Ovary (tissue), 10 donors: ENCODE measurements at regions of chr9 and their contacts with region 1.

Region 1: GRCh38 chr9:16726718-16727451 is 143.6 kb downstream of the BNC2 start:
- DNase-seq: peak; percentile 83 to 91 (median 89)
- H3K4me3 ChIP-seq: peak overlapping the region; percentile 53
- H3K27ac ChIP-seq: peak overlapping the region; percentile 83 to 94
- H3K4me1 ChIP-seq: no peaks in the 10 kb centered on the region
- H3K27me3 ChIP-seq: no peaks in the 10 kb centered on the region
- CTCF ChIP-seq: no peak
- EP300 ChIP-seq: peak; percentile 17
- POLR2A ChIP-seq: peak; percentile 70

Region 2: GRCh38 chr9:16191691-16192402 is 535.0 kb before region 1 on chr9:
- intact Hi-C with region 1: loop called in 1 of 4 experiments (anchors 10 kb)
- DNase-seq: peak; percentile 87 to 95 (median 91)
- H3K4me3 ChIP-seq: no peak overlapping the region
- H3K27ac ChIP-seq: peak overlapping the region in 1 of 2 donors; percentile 43
- H3K4me1 ChIP-seq: peaks cover 11% of the 10 kb centered on the region
- H3K27me3 ChIP-seq: no peaks in the 10 kb centered on the region
- CTCF ChIP-seq: peak; percentile 61 to 83 (median 81)
- EP300 ChIP-seq: no peak
- POLR2A ChIP-seq: no peak

Region 3: DNA sequence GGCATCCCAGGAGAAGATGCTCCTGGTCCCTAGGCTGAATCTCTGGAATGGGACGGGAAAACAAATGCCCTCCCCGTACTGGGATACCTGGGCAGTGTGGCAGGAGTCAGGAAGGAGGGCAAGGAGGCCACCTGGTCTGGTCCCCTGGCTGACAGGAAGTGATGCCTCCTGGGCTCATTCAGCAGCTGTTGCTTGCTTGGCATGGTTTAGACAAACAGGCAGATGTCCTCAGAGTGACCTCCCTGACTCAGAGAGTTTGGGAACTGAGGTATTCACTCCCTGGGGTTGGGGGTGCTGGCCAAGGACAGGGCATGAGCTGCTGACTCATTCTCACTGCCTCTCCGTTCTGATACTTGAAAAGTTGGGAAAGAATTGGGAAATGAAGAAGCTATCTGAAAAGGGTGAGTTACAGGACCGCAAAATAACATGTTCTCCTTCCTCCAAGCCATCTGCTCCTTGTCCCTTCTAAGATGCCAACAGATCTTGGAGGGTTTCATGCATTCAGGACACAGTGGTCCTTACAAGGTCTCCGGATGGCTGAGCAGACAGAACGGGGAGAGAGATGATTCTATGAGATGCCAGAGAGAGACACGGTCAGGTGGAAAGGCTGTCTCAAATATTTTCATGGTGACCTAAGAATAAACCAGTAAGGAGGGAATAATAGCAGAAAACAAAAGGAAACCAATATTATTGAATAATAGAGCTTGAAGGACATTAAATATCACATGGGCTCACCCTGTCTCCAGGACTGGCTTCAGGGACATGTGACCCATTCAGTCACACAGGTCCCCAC is 390.9 kb before region 1 on chr9:
- intact Hi-C with region 1: loop called in 1 of 4 experiments (anchors 10 kb)
- DNase-seq: peak; percentile 82 to 95 (median 87)
- H3K4me3 ChIP-seq: no peak overlapping the region
- H3K27ac ChIP-seq: peak overlapping the region; percentile 17 to 81
- H3K4me1 ChIP-seq: peaks cover 17% of the 10 kb centered on the region
- H3K27me3 ChIP-seq: no peaks in the 10 kb centered on the region
- CTCF ChIP-seq: peak in 1 of 3 donors; percentile 10
- EP300 ChIP-seq: peak; percentile 97
- POLR2A ChIP-seq: no peak

Region 4: DNA sequence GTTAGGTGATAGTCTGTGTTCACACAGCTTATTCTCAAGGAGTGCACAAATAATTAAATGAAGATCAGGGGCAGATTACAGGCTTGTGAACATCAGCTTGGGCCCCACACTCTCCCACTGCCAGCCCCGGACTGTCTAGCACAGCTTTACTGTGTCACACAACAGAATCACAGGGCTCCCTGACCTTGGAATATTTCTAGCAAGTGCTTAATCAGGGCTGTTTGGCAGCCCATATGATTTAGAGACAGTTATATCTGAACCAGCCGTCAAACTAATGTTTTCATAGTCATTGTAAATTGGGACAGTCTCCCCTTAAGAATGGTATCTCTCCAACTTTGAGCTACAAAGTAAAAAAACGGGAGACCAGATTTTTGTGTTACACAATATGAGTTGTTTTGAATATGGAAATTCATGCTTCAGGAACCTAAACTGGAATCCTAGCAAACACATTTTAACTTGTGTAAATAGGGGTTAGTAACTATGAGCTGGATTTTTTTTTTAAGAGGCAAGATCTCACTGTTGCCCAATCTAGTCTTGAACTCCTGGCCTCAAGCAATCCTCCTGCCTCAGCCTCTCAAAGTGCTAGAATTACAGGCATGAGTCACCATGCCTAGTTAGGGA is 374.0 kb before region 1 on chr9:
- intact Hi-C with region 1: loop called in 1 of 4 experiments (anchors 10 kb)
- DNase-seq: peak in 4 of 5 donors; percentile 49 to 68 (median 65)
- H3K4me3 ChIP-seq: no peak overlapping the region
- H3K27ac ChIP-seq: peak overlapping the region in 1 of 2 donors; percentile 77
- H3K4me1 ChIP-seq: peaks cover 14% of the 10 kb centered on the region
- H3K27me3 ChIP-seq: no peaks in the 10 kb centered on the region
- CTCF ChIP-seq: no peak
- EP300 ChIP-seq: no peak
- POLR2A ChIP-seq: no peak

Region 5: GRCh38 chr9:16417161-16417560 is 309.7 kb before region 1 on chr9:
- intact Hi-C with region 1: loop called in 1 of 4 experiments (anchors 10 kb)
- DNase-seq: no peak
- H3K4me3 ChIP-seq: peak overlapping the region; percentile 1
- H3K27ac ChIP-seq: peak overlapping the region in 1 of 2 donors; percentile 65
- H3K4me1 ChIP-seq: peaks cover 21% of the 10 kb centered on the region
- H3K27me3 ChIP-seq: no peaks in the 10 kb centered on the region
- CTCF ChIP-seq: no peak
- EP300 ChIP-seq: no peak
- POLR2A ChIP-seq: no peak

Region 6: GRCh38 chr9:16871356-16872151 is 144.7 kb after region 1 on chr9:
- intact Hi-C with region 1: loop called in 3 of 4 experiments (anchors 2 to 5 kb)
- DNase-seq: peak; percentile 55 to 78 (median 69)
- H3K4me3 ChIP-seq: peak overlapping the region; percentile 88
- H3K27ac ChIP-seq: peak overlapping the region; percentile 93
- H3K4me1 ChIP-seq: peaks cover 1% of the 10 kb centered on the region
- H3K27me3 ChIP-seq: no peaks in the 10 kb centered on the region
- CTCF ChIP-seq: no peak
- EP300 ChIP-seq: no peak
- POLR2A ChIP-seq: no peak

Region 7: DNA sequence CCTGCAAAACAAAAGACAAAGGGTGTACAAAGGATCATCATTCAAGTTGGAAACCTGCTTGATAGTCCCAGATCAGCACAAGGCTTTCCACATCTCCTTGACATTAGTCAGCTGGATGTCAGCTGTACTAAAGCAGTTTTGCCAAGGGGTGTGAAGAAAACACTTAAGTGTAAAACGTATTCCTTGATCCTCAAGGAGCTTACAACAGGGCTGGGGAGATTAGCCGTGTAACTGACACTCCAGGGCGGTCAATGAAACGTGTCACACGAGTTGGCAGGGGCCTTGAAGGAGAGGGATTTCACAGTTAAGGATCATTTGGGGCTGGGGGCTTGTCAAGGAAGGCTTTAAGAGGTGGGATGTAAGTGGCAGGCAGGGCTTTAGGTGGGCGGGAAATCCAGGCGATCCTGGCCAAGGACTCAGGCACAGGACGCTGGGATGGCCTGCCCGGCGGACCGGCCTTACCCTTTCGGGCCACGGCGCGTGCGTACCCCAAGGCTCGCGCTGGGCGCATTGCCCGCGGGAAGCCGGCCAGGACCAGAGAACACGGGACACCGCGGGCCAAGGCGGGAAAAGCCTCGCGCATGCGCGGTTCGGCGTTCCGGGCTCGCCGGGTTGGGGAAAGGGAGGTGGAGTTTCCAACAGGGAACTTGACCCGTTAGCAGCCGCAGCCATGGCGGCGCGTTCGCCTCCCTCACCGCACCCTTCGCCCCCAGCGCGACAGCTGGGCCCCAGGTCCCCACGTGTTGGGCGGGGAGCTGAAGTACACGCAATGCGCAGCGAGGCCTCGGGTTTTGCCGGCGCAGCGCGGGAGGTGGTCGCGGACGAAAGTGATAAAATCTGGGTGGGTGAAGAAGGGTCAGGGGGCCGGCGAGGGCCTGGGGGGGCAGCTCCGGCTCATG is 407.8 kb after region 1 on chr9 and contains the start of gene CNTLN:
- intact Hi-C with region 1: no loop called
- DNase-seq: peak; percentile 98 to 100 (median 100)
- H3K4me3 ChIP-seq: peak within 1 kb of the TSS; percentile 84
- H3K27ac ChIP-seq: peak within 1 kb of the TSS; percentile 83 to 84
- H3K4me1 ChIP-seq: peaks cover 9% of the 10 kb centered on the region
- H3K27me3 ChIP-seq: no peaks in the 10 kb centered on the region
- CTCF ChIP-seq: peak in 1 of 3 donors; percentile 27
- EP300 ChIP-seq: no peak
- POLR2A ChIP-seq: peak; percentile 58
- total RNA-seq, gene CNTLN: 13.1 to 24.8 (median 16.8) TPM